ENCODE measurements at regions of chr3 and their contacts with region 1.

Region 1: GRCh38 chr3:37967260-37967881 is 23.2 kb upstream of the VILL start:
- DNase-seq: peak in 4 of 5 donors; percentile 41 to 45 (median 44)
- H3K4me3 ChIP-seq: no peak overlapping the region
- H3K4me3 Mint-ChIP-seq: no peak overlapping the region
- H3K27ac ChIP-seq: no peak overlapping the region
- H3K27ac Mint-ChIP-seq: no peak overlapping the region
- H3K4me1 ChIP-seq: no peaks in the 10 kb centered on the region
- H3K4me1 Mint-ChIP-seq: peaks cover 0 to 2% (median 0%) of the 10 kb centered on the region in 4 donors
- H3K27me3 ChIP-seq: no peaks in the 10 kb centered on the region
- H3K27me3 Mint-ChIP-seq: no peaks in the 10 kb centered on the region

Region 2: GRCh38 chr3:37855363-37855970 is 111.9 kb before region 1 on chr3:
- CTCF ChIA-PET with region 1: no interaction called
- POLR2A ChIA-PET with region 1: interaction called, 3 read pairs
- intact Hi-C with region 1: loop called (anchors 1 kb)
- DNase-seq: peak; percentile 49 to 64 (median 60)
- H3K4me3 ChIP-seq: no peak overlapping the region
- H3K4me3 Mint-ChIP-seq: no peak overlapping the region
- H3K27ac ChIP-seq: no peak overlapping the region
- H3K27ac Mint-ChIP-seq: peak overlapping the region in 1 of 7 donors; percentile 33
- H3K4me1 ChIP-seq: peaks cover 7% of the 10 kb centered on the region
- H3K4me1 Mint-ChIP-seq: peaks cover 0 to 8% (median 3%) of the 10 kb centered on the region in 4 donors
- H3K27me3 ChIP-seq: no peaks in the 10 kb centered on the region
- H3K27me3 Mint-ChIP-seq: peaks cover 0 to 11% of the 10 kb centered on the region in 2 donors

Region 3: DNA sequence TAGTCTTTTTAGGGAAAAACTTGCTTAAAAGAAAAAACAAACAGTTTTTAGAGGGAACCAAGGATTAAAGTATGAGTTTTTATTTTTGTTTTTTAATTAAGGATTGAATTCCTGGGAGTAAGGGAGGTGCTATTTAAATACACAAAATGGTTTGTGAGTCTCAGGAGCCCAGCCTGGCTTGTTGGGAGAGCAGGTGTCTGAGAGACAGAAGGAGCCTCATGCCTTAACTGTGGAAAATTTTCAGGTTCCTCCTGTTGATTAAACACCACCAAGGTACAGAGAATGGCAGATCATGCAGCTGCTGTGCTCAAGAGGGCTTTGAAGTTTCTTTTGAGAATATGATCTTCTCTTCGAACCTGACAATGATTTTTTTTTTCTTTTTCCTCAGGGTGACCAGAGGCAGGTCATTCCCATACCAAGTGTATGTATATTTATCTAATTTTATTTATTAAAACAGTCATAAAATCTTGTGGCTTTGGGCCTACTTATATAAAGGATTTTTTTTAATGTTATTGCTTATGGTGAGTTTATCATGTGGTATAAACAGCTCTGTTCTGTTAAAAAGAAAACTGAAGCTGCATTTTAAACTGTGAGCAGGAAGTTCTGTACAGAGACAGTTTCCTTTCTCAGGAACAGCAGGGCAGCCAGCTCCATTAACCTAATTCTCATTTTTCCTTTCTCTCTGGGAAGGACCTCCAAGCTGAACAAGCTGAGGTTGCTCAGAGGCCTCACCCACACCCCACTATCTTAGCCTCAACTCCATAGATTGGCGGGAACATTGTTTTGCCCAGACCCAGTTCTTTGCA is 10.4 kb before region 1 on chr3:
- CTCF ChIA-PET with region 1: interaction called, 13 read pairs
- POLR2A ChIA-PET with region 1: no interaction called
- intact Hi-C with region 1: no loop called
- DNase-seq: peak in 2 of 5 donors; percentile 5 to 10
- H3K4me3 ChIP-seq: no peak overlapping the region
- H3K4me3 Mint-ChIP-seq: peak overlapping the region in 5 of 8 donors; percentile 21 to 69 (median 52)
- H3K27ac ChIP-seq: no peak overlapping the region
- H3K27ac Mint-ChIP-seq: peak overlapping the region; percentile 68 to 93 (median 88)
- H3K4me1 ChIP-seq: peaks cover 15% of the 10 kb centered on the region
- H3K4me1 Mint-ChIP-seq: peaks cover 13 to 30% (median 19%) of the 10 kb centered on the region in 4 donors
- H3K27me3 ChIP-seq: no peaks in the 10 kb centered on the region
- H3K27me3 Mint-ChIP-seq: no peaks in the 10 kb centered on the region